AG04450 (cell line): ENCODE measurements at regions of chr16 and their contacts with region 1.

Region 1: DNA sequence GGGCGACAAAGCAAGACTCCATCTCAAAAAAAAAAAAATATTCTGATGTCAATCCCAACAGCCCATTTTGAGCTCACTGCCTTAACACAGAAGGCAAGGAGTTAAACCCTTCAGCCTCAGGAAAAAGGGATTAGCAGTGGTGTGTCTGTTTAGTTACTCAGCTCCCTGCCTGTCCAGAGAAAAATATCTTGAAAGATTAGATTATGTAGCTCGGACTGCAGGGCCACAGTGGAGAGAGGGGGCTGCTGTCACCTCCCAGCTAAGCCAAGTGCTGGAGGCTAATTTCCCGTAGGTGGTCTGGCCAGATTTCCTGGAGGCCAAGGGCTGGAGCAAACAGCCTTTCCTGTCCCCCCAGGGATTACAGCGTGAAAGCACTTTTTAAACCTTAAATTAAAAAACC is 50.3 kb downstream of the C16orf95 start:
- DNase-seq: no peak
- H3K4me3 ChIP-seq: no peak overlapping the region
- H3K27ac ChIP-seq: no peak overlapping the region
- H3K27me3 ChIP-seq: peaks cover 22% of the 10 kb centered on the region
- CTCF ChIP-seq: no peak

Region 2: GRCh38 chr16:87278191-87279095 is 11.6 kb after region 1 on chr16:
- CTCF ChIA-PET with region 1: interaction called, 28 read pairs
- POLR2A ChIA-PET with region 1: no interaction called
- DNase-seq: peak; percentile 68
- H3K4me3 ChIP-seq: no peak overlapping the region
- H3K27ac ChIP-seq: no peak overlapping the region
- H3K27me3 ChIP-seq: no peaks in the 10 kb centered on the region
- CTCF ChIP-seq: peak; percentile 96

Region 3: GRCh38 chr16:87305505-87306391 is 38.9 kb after region 1 on chr16:
- CTCF ChIA-PET with region 1: no interaction called
- POLR2A ChIA-PET with region 1: no interaction called
- DNase-seq: peak; percentile 23
- H3K4me3 ChIP-seq: peak overlapping the region; percentile 25
- H3K27ac ChIP-seq: peak overlapping the region; percentile 11
- H3K27me3 ChIP-seq: no peaks in the 10 kb centered on the region
- CTCF ChIP-seq: peak; percentile 37